ENCODE measurements at regions of chr15 and their contacts with region 1.

Region 1: GRCh38 chr15:42194502-42194901 is 13.6 kb downstream of the VPS39 start:
- DNase-seq: no peak
- H3K4me3 Mint-ChIP-seq: no peak overlapping the region
- H3K27ac Mint-ChIP-seq: peak overlapping the region; percentile 76
- H3K4me1 Mint-ChIP-seq: peaks cover 35% of the 10 kb centered on the region
- H3K27me3 Mint-ChIP-seq: no peaks in the 10 kb centered on the region

Region 2: DNA sequence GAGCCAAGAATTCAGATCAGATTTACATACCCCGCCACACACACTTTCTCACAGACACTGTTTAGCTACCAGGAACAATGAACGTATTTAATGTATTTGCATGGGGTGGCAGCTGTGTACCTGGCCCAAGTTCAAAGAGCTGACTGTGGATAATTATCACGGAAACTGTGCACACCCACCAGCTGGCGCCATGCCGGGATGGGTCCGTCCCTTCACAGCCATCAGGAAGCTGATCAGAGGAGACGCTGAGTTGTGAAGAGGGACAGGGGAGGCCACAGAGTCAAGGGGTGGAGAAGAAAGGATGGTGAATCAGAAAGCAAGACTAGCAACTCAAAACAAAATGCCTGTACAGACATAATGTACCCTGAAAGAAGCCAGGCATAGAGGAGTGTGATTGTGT is 87.0 kb before region 1 on chr15:
- intact Hi-C with region 1: loop called (anchors 5 kb)
- DNase-seq: peak; percentile 62
- H3K4me3 Mint-ChIP-seq: peak overlapping the region; percentile 52
- H3K27ac Mint-ChIP-seq: peak overlapping the region; percentile 51
- H3K4me1 Mint-ChIP-seq: peaks cover 16% of the 10 kb centered on the region
- H3K27me3 Mint-ChIP-seq: peaks cover 7% of the 10 kb centered on the region

Region 3: DNA sequence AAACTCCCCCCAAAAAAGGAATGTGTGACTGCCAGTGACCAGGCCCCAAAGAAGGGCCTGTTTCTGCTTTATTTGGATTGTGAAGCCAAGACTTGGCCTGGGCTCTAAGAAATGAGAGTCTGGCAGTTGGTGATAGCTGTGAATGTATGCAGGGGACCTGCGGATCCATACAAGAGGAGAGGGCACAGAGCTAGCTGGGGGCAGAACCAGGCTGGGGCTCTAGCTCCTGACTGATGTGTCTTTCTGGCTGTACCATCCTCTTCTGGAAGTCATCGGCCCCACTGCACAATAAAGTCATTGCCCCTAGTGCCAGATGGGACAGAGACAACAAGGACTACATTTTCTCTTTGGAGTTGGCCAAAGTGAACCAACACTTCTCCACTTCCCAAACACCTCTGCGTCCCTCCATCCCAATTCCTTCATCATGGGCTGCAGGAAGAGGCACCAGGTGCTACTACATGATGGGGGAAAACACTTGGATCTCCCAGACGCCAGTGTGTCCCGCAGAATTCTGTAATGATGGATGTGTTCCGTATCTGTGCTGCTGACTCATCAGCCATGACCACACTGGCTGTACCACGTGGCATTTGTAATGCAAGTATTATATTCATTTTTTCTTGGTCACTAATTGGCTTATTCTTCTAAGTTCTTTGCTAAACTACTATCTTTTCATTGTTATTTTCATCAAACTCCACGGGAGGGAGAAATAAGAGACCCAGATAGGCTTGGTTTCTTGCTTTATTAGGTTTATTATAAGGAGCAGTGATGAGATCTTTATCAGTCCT is 36.3 kb before region 1 on chr15:
- intact Hi-C with region 1: no loop called
- DNase-seq: no peak
- H3K4me3 Mint-ChIP-seq: no peak overlapping the region
- H3K27ac Mint-ChIP-seq: peak overlapping the region; percentile 21
- H3K4me1 Mint-ChIP-seq: peaks cover 2% of the 10 kb centered on the region
- H3K27me3 Mint-ChIP-seq: no peaks in the 10 kb centered on the region

Region 4: DNA sequence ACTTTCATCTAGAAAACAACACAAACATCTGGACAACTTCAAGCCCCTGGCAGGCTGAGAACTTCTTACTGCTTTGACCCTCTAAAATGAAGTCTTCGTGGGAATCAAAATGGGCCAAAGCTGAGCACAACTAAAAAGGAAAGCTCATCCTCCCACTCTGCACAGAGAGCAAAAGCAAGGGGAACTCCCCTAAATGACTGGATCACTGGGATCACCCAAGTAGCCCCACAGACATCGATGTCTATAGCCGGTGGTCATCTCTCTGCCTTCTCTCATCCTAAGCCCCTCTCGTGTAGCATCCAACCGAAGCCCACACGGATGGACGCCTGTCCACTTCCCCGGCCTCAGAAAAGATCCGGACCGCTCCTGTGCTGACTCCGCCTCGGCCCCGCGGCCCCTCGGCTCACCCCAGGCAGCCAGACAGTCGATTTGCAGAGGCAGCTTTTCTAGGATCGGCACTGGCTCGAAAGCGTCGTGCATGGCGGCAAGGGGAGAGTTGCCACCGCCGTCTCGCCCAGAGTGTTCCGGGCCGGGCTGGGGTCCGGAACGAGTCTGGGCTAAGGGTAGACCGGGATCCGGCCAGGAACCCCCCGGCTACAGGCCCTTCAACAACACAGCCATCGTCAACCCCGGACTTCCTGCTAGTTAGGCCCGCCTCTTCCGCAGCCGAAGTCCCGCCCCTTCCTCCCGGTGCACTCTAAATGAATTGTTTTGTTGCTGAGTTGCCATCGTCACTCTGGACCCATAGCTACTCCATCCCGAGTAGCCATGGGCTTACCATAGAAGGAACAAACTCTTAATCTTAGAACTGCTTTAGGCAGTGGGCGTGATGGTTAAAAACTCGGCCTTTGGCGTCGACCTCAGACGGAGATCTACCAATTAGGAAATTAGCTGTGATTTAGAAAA is 13.4 kb after region 1 on chr15 and contains the start of gene VPS39:
- intact Hi-C with region 1: loop called (anchors 1 kb)
- DNase-seq: peak; percentile 96
- H3K4me3 Mint-ChIP-seq: peak within 1 kb of the TSS; percentile 98
- H3K27ac Mint-ChIP-seq: peak within 1 kb of the TSS; percentile 98
- H3K4me1 Mint-ChIP-seq: peaks cover 28% of the 10 kb centered on the region
- H3K27me3 Mint-ChIP-seq: no peaks in the 10 kb centered on the region
- total RNA-seq, gene VPS39: 58.0 TPM in 2 replicates

Measured in activated CD4-positive, alpha-beta T cell treated with anti-CD3 and anti-CD28 coated beads, Interleukin-2, amount 10 ng/mL, durations not matched to agents 24 days and 14 days (primary cell).